Activated CD8-positive, alpha-beta memory T cell treated with anti-CD3 and anti-CD28 coated beads, Interleukin-2, amount 10 ng/mL, durations not matched to agents 7 days and 5 days (primary cell): ENCODE measurements at regions of chr3 and their contacts with region 1.

Region 1: DNA sequence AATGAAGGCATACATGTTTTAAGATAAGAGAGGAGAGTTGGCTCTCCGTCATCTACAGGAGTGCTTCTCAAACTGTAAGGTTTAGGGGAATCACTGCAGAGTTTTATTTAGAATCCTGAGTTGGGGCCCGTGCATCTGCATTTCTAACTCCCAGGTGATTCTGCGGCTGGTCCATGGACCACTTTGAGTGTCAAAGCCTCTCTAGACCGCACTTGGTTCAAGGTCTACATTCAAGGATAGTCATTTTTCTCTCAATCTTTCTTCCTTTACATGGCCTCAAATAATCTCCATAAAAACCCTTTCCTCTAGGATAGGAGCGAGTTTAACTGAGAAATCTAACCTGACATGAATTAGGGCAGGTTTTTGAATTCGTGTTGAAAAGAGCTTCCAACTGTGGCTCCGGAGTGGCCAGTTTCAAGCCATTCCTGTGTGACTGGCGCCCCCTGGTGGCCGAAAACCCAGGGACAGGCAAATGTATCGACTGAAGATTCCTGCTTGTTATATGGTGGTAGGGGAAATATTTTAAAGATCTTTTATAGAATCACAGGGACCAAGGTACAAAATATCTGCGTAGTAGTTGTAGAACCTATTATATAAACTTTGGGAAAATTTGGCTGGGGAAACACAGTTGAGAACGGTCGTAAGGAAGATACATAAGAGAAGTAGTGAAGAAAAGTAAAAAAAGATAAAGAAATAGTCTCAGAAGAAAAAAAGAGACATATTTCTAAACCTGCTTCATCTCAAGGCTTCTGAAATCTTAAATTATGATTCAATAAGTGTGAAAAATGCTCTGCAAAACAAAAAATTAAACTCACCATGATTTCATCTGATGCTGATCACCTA is 11.9 kb downstream of the GABRR3 start:
- DNase-seq: peak; percentile 93
- ATAC-seq: peak; percentile 89
- H3K4me3 Mint-ChIP-seq: no peak overlapping the region
- H3K27ac Mint-ChIP-seq: peak overlapping the region; percentile 2
- H3K4me1 Mint-ChIP-seq: peaks cover 15% of the 10 kb centered on the region
- H3K27me3 Mint-ChIP-seq: no peaks in the 10 kb centered on the region

Region 2: DNA sequence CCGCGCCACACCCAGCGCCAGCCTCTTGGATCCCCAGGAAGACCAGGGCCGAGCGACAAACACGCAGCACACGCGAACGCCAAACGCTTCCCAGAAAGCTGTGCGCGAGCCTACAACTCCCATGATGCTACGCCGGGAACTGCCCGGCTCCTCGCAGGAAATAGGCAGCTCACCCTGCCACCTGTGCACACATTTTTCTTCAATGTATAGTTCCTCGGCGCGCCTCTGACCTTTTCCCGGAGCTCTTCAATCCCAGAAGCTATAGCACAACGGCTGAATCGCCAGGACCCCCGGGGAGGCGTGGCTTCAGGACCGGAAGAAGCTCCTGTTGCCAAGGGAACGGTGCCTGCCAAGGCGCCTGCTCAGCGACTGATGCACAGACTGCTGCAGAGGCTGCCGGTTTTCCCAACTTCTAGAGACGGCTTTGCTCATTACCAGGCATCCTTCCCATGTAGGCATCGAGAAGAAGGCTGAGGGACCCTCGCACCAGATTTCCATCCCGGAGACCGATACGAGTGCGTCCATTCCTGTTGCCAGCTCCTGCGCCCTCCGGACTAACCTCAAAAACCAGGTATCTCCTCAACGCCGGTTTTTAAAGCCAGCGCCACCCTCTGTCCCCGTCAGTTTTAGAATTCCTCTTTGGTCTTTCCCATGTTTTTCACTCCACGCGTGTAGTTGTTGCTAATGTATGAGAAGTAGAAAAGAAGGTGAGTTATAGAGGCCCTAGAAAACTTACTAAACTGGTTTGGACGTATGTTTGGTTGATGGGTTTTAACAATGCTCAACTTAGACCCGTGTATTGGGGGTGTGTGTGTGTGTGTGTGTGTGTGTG is 258.6 kb before region 1 on chr3 and contains the start of gene ARL6:
- CTCF ChIA-PET with region 1: interaction called, 12 read pairs
- DNase-seq: peak; percentile 84
- ATAC-seq: peak; percentile 94
- H3K4me3 Mint-ChIP-seq: peak within 1 kb of the TSS; percentile 93
- H3K27ac Mint-ChIP-seq: peak within 1 kb of the TSS; percentile 89
- H3K4me1 Mint-ChIP-seq: peaks cover 27% of the 10 kb centered on the region
- H3K27me3 Mint-ChIP-seq: no peaks in the 10 kb centered on the region
- total RNA-seq, gene ARL6: 4.5 to 5.4 TPM

Region 3: GRCh38 chr3:97804471-97804870 is 218.7 kb before region 1 on chr3:
- CTCF ChIA-PET with region 1: interaction called, 10 read pairs
- DNase-seq: no peak
- ATAC-seq: no peak
- H3K4me3 Mint-ChIP-seq: no peak overlapping the region
- H3K27ac Mint-ChIP-seq: no peak overlapping the region
- H3K4me1 Mint-ChIP-seq: no peaks in the 10 kb centered on the region
- H3K27me3 Mint-ChIP-seq: peaks cover 2% of the 10 kb centered on the region

Region 4: DNA sequence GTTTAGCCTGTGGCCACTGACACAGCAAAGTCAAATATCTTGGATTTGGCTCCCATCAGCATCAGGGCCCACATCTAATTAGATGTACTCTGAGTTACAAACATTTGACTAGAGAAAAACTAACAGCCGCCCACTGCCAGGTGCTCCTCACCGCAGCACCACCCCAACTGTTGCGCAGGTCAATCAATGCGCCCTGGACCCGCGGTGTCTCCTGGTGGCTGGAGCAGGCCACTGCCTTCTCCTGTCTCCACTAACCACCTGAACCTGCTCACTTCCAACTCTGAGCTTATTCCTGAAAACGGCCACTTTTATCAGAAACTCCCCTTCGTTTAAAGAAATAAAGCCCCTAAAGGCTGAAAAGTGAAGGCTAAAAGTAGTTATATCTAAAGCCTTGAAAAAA is 55.2 kb before region 1 on chr3:
- CTCF ChIA-PET with region 1: interaction called, 22 read pairs
- DNase-seq: no peak
- ATAC-seq: no peak
- H3K4me3 Mint-ChIP-seq: peak overlapping the region; percentile 96
- H3K27ac Mint-ChIP-seq: peak overlapping the region; percentile 73
- H3K4me1 Mint-ChIP-seq: peaks cover 81% of the 10 kb centered on the region
- H3K27me3 Mint-ChIP-seq: no peaks in the 10 kb centered on the region